A673 (cell line): ENCODE measurements at regions of chr1 and their contacts with region 1.

Region 1: DNA sequence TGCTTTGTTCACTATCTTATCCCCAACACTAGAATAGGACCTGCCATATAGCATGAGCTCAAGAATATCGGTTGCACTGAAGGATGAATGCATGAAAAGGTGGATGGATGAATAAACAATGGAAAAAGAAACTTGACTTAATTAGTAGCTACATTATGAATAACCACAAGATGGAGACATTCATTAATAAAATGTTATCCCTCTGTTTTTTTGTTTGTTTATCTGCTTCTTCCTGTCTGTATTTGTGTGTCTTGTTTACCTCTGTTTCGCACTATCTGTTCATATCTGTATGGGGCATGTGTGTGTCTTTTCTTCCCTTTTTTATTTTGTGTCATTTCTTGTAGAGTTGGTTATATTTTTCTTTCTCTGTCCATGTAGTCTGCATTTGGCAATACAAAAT is 1.1 kb upstream of the OR14I1 start:
- DNase-seq: no peak
- H3K4me3 ChIP-seq: no peak overlapping the region
- H3K27ac ChIP-seq: no peak overlapping the region
- H3K4me1 ChIP-seq: peaks cover 5% of the 10 kb centered on the region
- H3K27me3 ChIP-seq: peaks cover 7% of the 10 kb centered on the region
- CTCF ChIP-seq: peak; percentile 33; the same call in 1 of the 2 replicates

Region 2: GRCh38 chr1:248807067-248807737 is 103.5 kb after region 1 on chr1:
- CTCF ChIA-PET with region 1: no interaction called
- POLR2A ChIA-PET with region 1: no interaction called
- intact Hi-C with region 1: loop called (anchors 5 kb)
- DNase-seq: peak; percentile 52
- H3K4me3 ChIP-seq: no peak overlapping the region
- H3K27ac ChIP-seq: no peak overlapping the region
- H3K4me1 ChIP-seq: no peaks in the 10 kb centered on the region
- H3K27me3 ChIP-seq: peaks cover 3% of the 10 kb centered on the region
- CTCF ChIP-seq: peak; percentile 81